ENCODE measurements at regions of chr7 and their contacts with region 1.

Region 1: DNA sequence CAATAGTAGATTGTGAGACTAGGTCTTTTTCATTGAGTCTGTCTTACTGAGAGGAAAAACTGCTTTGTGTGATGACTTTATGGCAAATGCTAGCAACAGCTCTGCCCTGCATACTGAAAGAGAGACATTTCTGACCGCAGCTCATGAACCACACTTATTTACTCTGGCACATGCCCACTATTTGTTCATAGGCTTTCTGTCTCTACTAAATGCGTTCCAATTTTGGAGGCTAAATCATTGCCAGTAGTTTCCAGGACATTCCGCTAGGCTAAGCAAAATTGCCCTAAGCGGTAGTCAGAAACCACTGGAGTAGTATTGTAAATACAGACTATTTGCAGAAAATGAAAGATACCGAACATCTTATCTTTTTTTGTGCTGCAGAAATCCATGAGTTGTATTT is 55.6 kb upstream of the DLX6 start:
- DNase-seq: peak; percentile 93
- ATAC-seq: peak; percentile 92
- H3K4me3 ChIP-seq: peak overlapping the region; percentile 26; the same call in 1 of the 2 replicates
- H3K27ac ChIP-seq: peak overlapping the region; percentile 9; the same call in 1 of the 2 replicates
- H3K4me1 ChIP-seq: peaks cover 32% of the 10 kb centered on the region
- H3K27me3 ChIP-seq: no peaks in the 10 kb centered on the region
- CTCF ChIP-seq: no peak; the same call in 1 of the 2 replicates

Region 2: DNA sequence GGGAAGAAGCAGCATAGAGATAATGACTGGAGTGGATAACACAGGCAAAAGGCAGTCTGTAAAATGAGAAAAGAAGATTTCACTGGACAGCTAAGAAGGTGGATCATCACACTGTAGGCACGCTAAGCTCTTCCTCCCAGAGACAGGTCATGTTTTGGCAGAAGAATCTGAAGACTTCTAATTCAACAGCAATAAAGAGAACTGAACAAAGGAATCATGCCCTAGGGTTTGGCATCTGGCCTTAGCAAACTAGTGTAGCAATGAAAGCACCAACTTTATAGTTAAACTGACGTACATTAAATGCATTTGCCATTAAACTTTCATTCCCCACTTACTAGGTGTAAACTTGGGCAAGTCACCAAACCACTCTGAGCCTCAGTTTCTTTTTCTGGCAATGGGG is 155.7 kb before region 1 on chr7:
- CTCF ChIA-PET with region 1: no interaction called
- POLR2A ChIA-PET with region 1: no interaction called
- intact Hi-C with region 1: loop called (anchors 1 kb)
- DNase-seq: peak; percentile 76
- ATAC-seq: peak; percentile 70
- H3K4me3 ChIP-seq: no peak overlapping the region
- H3K27ac ChIP-seq: peak overlapping the region; percentile 68
- H3K4me1 ChIP-seq: peaks cover 4% of the 10 kb centered on the region; the same call in 1 of the 2 replicates
- H3K27me3 ChIP-seq: no peaks in the 10 kb centered on the region
- CTCF ChIP-seq: no peak

Region 3: GRCh38 chr7:96901822-96902445 is 47.8 kb before region 1 on chr7:
- CTCF ChIA-PET with region 1: no interaction called
- POLR2A ChIA-PET with region 1: no interaction called
- intact Hi-C with region 1: loop called (anchors 1 kb)
- DNase-seq: peak; percentile 92
- ATAC-seq: peak; percentile 92
- H3K4me3 ChIP-seq: no peak overlapping the region
- H3K27ac ChIP-seq: peak overlapping the region; percentile 68
- H3K4me1 ChIP-seq: peaks cover 23% of the 10 kb centered on the region
- H3K27me3 ChIP-seq: no peaks in the 10 kb centered on the region
- CTCF ChIP-seq: no peak

Region 4: GRCh38 chr7:97117372-97118188 is 167.8 kb after region 1 on chr7 and contains the start of gene SDHAF3:
- CTCF ChIA-PET with region 1: no interaction called
- POLR2A ChIA-PET with region 1: no interaction called
- intact Hi-C with region 1: no loop called
- DNase-seq: peak; percentile 91
- ATAC-seq: peak; percentile 83
- H3K4me3 ChIP-seq: peak within 1 kb of the TSS; percentile 66
- H3K27ac ChIP-seq: no peak within 1 kb of the TSS; the same call in 1 of the 2 replicates
- H3K4me1 ChIP-seq: no peaks in the 10 kb centered on the region; the same call in 1 of the 2 replicates
- H3K27me3 ChIP-seq: no peaks in the 10 kb centered on the region
- CTCF ChIP-seq: no peak
- total RNA-seq, gene SDHAF3: 9.5 and 19.9 TPM in 2 replicates

Measured in PC-3 (cell line).